Activated CD4-positive, alpha-beta T cell treated with anti-CD3 and anti-CD28 coated beads, Interleukin-2, amount 10 ng/mL, durations not matched to agents 24 days and 14 days (primary cell): ENCODE measurements at regions of chr16 and their contacts with region 1.

Region 1: GRCh38 chr16:58459344-58460218 is 40.4 kb upstream of the NDRG4 start:
- DNase-seq: peak; percentile 78
- H3K4me3 Mint-ChIP-seq: peak overlapping the region; percentile 0
- H3K27ac Mint-ChIP-seq: peak overlapping the region; percentile 19
- H3K4me1 Mint-ChIP-seq: peaks cover 14% of the 10 kb centered on the region
- H3K27me3 Mint-ChIP-seq: peaks cover 28% of the 10 kb centered on the region

Region 2: GRCh38 chr16:58137581-58137980 is 322.0 kb before region 1 on chr16:
- intact Hi-C with region 1: no loop called
- DNase-seq: no peak
- H3K4me3 Mint-ChIP-seq: no peak overlapping the region
- H3K27ac Mint-ChIP-seq: no peak overlapping the region
- H3K4me1 Mint-ChIP-seq: no peaks in the 10 kb centered on the region
- H3K27me3 Mint-ChIP-seq: peaks cover 3% of the 10 kb centered on the region

Region 3: GRCh38 chr16:58409316-58409973 is 50.1 kb before region 1 on chr16:
- intact Hi-C with region 1: loop called (anchors 10 kb)
- DNase-seq: no peak
- H3K4me3 Mint-ChIP-seq: no peak overlapping the region
- H3K27ac Mint-ChIP-seq: no peak overlapping the region
- H3K4me1 Mint-ChIP-seq: no peaks in the 10 kb centered on the region
- H3K27me3 Mint-ChIP-seq: peaks cover 2% of the 10 kb centered on the region